Dendritic cell treated with granulocyte-macrophage colony-stimulating factor and Interleukin-4, amounts not matched to agents 40 ng/mL and 50 ng/mL, for 4 days (primary cell): ENCODE measurements at regions of chr14 and their contacts with region 1.

Region 1: GRCh38 chr14:95361373-95362137 is 41.8 kb upstream of the CLMN start:
- H3K4me3 Mint-ChIP-seq: no peak overlapping the region
- H3K27ac Mint-ChIP-seq: no peak overlapping the region
- H3K4me1 Mint-ChIP-seq: peaks cover 8% of the 10 kb centered on the region
- H3K27me3 Mint-ChIP-seq: peaks cover 62% of the 10 kb centered on the region

Region 2: GRCh38 chr14:95287176-95287754 is 74.3 kb before region 1 on chr14:
- intact Hi-C with region 1: loop called (anchors 10 kb)
- H3K4me3 Mint-ChIP-seq: no peak overlapping the region
- H3K27ac Mint-ChIP-seq: no peak overlapping the region
- H3K4me1 Mint-ChIP-seq: peaks cover 15% of the 10 kb centered on the region
- H3K27me3 Mint-ChIP-seq: peaks cover 2% of the 10 kb centered on the region